PC-9 (cell line): ENCODE measurements at regions of chr12 and their contacts with region 1.

Region 1: GRCh38 chr12:76031537-76032073 is at the start of gene PHLDA1:
- DNase-seq: peak; percentile 88 to 98
- H3K4me3 ChIP-seq: peak within 1 kb of the TSS; percentile 94
- H3K27ac ChIP-seq: peak within 1 kb of the TSS; percentile 95
- H3K4me1 ChIP-seq: peaks cover 37% of the 10 kb centered on the region
- H3K27me3 ChIP-seq: no peaks in the 10 kb centered on the region
- CTCF ChIP-seq: peak; percentile 44; the same call in 1 of the 2 replicates
- total RNA-seq, gene PHLDA1: 29.1 and 38.3 TPM in 2 replicates

Region 2: GRCh38 chr12:75511116-75512048 is 520.2 kb before region 1 on chr12 and contains the start of gene KRR1:
- CTCF ChIA-PET with region 1: no interaction called
- POLR2A ChIA-PET with region 1: interaction called, 8 read pairs
- intact Hi-C with region 1: loop called (anchors 5 kb)
- DNase-seq: peak; percentile 81 to 92
- H3K4me3 ChIP-seq: peak within 1 kb of the TSS; percentile 91
- H3K27ac ChIP-seq: peak within 1 kb of the TSS; percentile 59
- H3K4me1 ChIP-seq: peaks cover 24% of the 10 kb centered on the region
- H3K27me3 ChIP-seq: no peaks in the 10 kb centered on the region
- CTCF ChIP-seq: no peak
- total RNA-seq, gene KRR1: 41.6 and 45.9 TPM in 2 replicates

Region 3: DNA sequence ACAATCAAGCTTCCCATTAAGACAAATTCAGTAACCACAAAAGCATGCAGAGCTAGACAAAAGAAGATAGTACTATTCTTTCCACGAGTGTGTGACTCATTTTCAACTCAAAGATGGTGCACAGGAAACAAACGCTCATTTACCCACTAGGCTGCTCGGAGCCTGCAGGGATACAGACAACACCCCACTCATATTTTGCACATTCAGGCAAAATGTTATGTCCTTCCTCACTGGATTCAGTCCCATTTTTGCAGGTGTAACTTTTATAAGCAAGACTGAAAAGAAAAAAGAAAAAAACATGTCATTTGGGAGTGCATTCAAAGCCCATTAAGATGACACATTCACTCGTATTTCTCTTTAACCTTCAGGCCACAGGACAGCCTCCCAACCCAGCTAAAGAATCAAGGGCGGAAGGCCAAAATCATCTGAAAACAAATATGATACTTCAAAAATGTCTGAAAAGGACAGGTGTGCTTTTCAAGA is 372.7 kb before region 1 on chr12:
- CTCF ChIA-PET with region 1: interaction called, 4 read pairs
- POLR2A ChIA-PET with region 1: interaction called, 4 read pairs
- intact Hi-C with region 1: loop called (anchors 1 kb)
- DNase-seq: peak in 1 of 2 experiments; percentile 31
- H3K4me3 ChIP-seq: no peak overlapping the region
- H3K27ac ChIP-seq: no peak overlapping the region
- H3K4me1 ChIP-seq: peaks cover 28% of the 10 kb centered on the region
- H3K27me3 ChIP-seq: no peaks in the 10 kb centered on the region
- CTCF ChIP-seq: no peak

Region 4: GRCh38 chr12:75814851-75815754 is 216.5 kb before region 1 on chr12:
- CTCF ChIA-PET with region 1: no interaction called
- POLR2A ChIA-PET with region 1: interaction called, 3 read pairs
- intact Hi-C with region 1: loop called (anchors 2 kb)
- DNase-seq: peak; percentile 18 to 53
- H3K4me3 ChIP-seq: no peak overlapping the region
- H3K27ac ChIP-seq: no peak overlapping the region
- H3K4me1 ChIP-seq: peaks cover 10% of the 10 kb centered on the region
- H3K27me3 ChIP-seq: no peaks in the 10 kb centered on the region
- CTCF ChIP-seq: no peak

Region 5: DNA sequence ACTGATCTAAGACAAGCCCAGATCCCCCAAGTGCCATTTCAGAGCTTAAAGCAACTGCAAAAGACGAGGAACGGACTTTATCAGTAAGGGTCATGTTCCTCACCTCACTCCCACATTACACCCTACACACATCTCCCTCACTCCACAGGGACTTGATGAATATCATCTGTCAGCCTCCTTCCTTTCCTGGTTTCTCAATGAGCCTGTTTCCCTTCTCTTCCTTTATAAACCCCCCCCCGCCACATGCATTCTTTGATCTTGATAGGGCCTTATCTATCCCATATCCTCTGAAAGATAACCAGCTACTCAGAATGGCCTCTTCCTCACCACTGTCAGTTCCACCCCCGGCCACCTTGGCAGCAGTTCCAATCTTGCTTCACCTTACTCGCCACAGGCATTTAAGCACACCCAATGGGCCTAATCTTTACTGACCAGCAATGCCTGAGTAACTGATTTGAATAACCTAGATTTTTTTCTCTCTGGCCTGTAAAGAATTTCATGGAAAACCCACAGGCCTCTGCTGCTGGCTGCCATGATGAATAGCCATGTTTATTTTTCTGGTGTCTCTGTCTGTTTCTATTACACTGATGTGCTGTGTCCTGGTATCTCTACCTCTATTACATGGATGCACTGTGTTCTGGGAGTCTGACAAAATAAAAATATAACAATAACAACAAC is 138.7 kb before region 1 on chr12:
- CTCF ChIA-PET with region 1: interaction called, 7 read pairs
- POLR2A ChIA-PET with region 1: no interaction called
- intact Hi-C with region 1: loop called (anchors 5 kb)
- DNase-seq: peak; percentile 51 to 64
- H3K4me3 ChIP-seq: no peak overlapping the region
- H3K27ac ChIP-seq: no peak overlapping the region
- H3K4me1 ChIP-seq: peaks cover 39% of the 10 kb centered on the region
- H3K27me3 ChIP-seq: no peaks in the 10 kb centered on the region
- CTCF ChIP-seq: no peak

Region 6: GRCh38 chr12:76042147-76042546 is 10.5 kb after region 1 on chr12:
- CTCF ChIA-PET with region 1: no interaction called
- POLR2A ChIA-PET with region 1: no interaction called
- intact Hi-C with region 1: no loop called
- DNase-seq: no peak
- H3K4me3 ChIP-seq: no peak overlapping the region
- H3K27ac ChIP-seq: no peak overlapping the region
- H3K4me1 ChIP-seq: peaks cover 11% of the 10 kb centered on the region; the same call in 1 of the 2 replicates
- H3K27me3 ChIP-seq: no peaks in the 10 kb centered on the region
- CTCF ChIP-seq: no peak

Region 7: GRCh38 chr12:76337583-76337982 is 306.0 kb after region 1 on chr12:
- CTCF ChIA-PET with region 1: interaction called, 10 read pairs
- POLR2A ChIA-PET with region 1: no interaction called
- intact Hi-C with region 1: loop called (anchors 10 kb)
- DNase-seq: peak in 1 of 2 experiments; percentile 39
- H3K4me3 ChIP-seq: no peak overlapping the region
- H3K27ac ChIP-seq: no peak overlapping the region
- H3K4me1 ChIP-seq: no peaks in the 10 kb centered on the region; the same call in 1 of the 2 replicates
- H3K27me3 ChIP-seq: no peaks in the 10 kb centered on the region
- CTCF ChIP-seq: no peak